ENCODE measurements at regions of chr3 and their contacts with region 1.

Region 1: GRCh38 chr3:98817547-98818041 is 54.5 kb downstream of the ST3GAL6 start:
- DNase-seq: peak; percentile 39
- H3K4me3 ChIP-seq: no peak overlapping the region
- H3K27ac ChIP-seq: peak overlapping the region; percentile 40 to 59
- H3K4me1 ChIP-seq: peaks cover 10 to 22% of the 10 kb centered on the region in 2 experiments
- H3K27me3 ChIP-seq: no peaks in the 10 kb centered on the region
- CTCF ChIP-seq: peak; percentile 69
- EP300 ChIP-seq: no peak
- RAD21 ChIP-seq: peak; percentile 81

Region 2: DNA sequence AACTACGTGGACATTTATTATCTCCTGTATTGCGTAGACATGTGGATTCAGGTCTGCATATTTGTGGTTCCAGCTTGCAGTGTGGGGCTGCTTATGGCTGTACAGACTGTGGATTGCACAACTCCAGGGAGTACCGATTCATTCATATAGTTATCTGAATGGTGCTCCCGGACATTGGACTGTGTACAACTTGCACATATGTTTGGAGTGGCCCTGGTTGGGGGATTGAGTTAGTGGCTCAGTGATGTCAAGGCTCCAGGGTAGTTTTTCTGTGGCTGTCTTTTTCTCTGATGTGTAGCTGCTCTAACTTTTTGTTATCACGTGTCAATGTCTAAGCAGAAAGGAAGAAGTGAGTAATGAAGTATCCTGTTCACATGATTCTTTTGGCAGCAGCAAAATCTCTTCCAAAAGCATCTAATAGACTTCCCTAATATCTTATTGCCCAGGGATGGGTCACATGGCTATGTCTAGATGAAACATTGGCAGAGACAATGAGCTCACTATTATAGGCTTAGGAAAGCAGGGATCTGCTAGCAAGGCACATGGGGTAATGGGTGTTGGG is 38.7 kb before region 1 on chr3:
- CTCF ChIA-PET with region 1: interaction called, 11 read pairs
- POLR2A ChIA-PET with region 1: no interaction called
- DNase-seq: no peak
- H3K4me3 ChIP-seq: no peak overlapping the region
- H3K27ac ChIP-seq: peak overlapping the region; percentile 60 to 84
- H3K4me1 ChIP-seq: peaks cover 0 to 39% of the 10 kb centered on the region in 2 experiments
- H3K27me3 ChIP-seq: no peaks in the 10 kb centered on the region
- CTCF ChIP-seq: no peak
- EP300 ChIP-seq: no peak
- RAD21 ChIP-seq: no peak

Region 3: GRCh38 chr3:98791341-98792325 is 26.0 kb before region 1 on chr3:
- CTCF ChIA-PET with region 1: no interaction called
- POLR2A ChIA-PET with region 1: no interaction called
- DNase-seq: no peak
- H3K4me3 ChIP-seq: no peak overlapping the region
- H3K27ac ChIP-seq: peak overlapping the region in 1 of 2 experiments; percentile 49; a peak in 2 of 4 replicates
- H3K4me1 ChIP-seq: peaks cover 0 to 14% of the 10 kb centered on the region in 2 experiments; a peak in 2 of 4 replicates
- H3K27me3 ChIP-seq: no peaks in the 10 kb centered on the region
- CTCF ChIP-seq: no peak
- EP300 ChIP-seq: no peak
- RAD21 ChIP-seq: no peak

Region 4: GRCh38 chr3:98986073-98986472 is 168.5 kb after region 1 on chr3:
- CTCF ChIA-PET with region 1: interaction called, 54 read pairs
- POLR2A ChIA-PET with region 1: no interaction called
- DNase-seq: no peak
- H3K4me3 ChIP-seq: no peak overlapping the region
- H3K27ac ChIP-seq: peak overlapping the region; percentile 69 to 94; a peak in 3 of 4 replicates
- H3K4me1 ChIP-seq: peaks cover 11 to 27% of the 10 kb centered on the region in 2 experiments
- H3K27me3 ChIP-seq: no peaks in the 10 kb centered on the region
- CTCF ChIP-seq: no peak
- EP300 ChIP-seq: peak; percentile 20 to 39; a peak in 2 of 4 replicates
- RAD21 ChIP-seq: no peak

Region 5: DNA sequence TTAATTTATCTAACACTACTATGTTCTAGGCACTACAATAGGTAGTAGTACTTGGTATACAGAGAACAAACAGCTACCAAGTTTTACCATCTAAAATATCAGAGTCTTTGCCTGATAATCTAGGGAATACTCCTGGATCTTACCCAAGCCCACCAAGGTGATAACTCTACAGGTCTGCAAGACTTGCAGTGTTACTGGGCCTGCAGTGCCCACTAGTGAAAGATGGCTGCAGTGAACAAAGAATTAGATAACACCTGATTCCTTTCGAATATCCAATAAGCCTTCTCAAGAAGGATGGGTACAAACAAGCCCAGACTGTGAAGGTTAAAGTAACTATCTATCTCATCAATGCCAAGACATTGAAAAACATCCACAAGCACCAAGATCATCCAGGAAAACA is 400.9 kb after region 1 on chr3:
- CTCF ChIA-PET with region 1: no interaction called
- POLR2A ChIA-PET with region 1: no interaction called
- DNase-seq: no peak
- H3K4me3 ChIP-seq: no peak overlapping the region
- H3K27ac ChIP-seq: no peak overlapping the region
- H3K4me1 ChIP-seq: no peaks in the 10 kb centered on the region
- H3K27me3 ChIP-seq: no peaks in the 10 kb centered on the region
- CTCF ChIP-seq: no peak
- EP300 ChIP-seq: no peak
- RAD21 ChIP-seq: no peak

Region 6: DNA sequence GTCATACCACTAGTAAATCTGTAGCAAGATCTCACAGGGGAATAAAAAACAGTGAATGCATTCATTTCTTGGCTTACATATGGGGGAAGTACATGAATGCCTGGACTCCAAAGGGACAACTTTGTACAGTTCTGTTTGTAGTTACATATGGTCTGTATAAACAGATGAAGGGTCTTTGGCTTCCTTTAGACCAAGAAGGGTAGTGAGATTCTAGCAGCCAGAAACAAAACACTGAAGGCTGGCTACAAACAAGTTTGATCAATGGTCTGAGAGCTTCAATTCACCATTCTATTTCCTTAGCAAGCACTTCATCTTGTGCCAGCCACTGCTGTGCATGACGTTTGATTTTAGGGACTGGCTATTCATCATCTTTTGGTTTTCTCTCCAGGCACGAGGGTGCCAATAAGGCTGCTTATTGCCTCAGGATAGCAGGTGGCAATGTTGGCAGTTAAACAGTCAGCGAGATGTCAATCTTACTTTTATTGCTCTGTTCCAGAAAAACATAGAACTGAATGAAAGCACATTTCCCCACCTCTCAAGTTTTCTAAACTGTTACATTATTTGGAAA is 507.1 kb after region 1 on chr3:
- CTCF ChIA-PET with region 1: no interaction called
- POLR2A ChIA-PET with region 1: no interaction called
- DNase-seq: no peak
- H3K4me3 ChIP-seq: no peak overlapping the region
- H3K27ac ChIP-seq: no peak overlapping the region
- H3K4me1 ChIP-seq: no peaks in the 10 kb centered on the region; a peak in 1 of 4 replicates
- H3K27me3 ChIP-seq: no peaks in the 10 kb centered on the region; the same call in 1 of the 2 replicates
- CTCF ChIP-seq: no peak
- EP300 ChIP-seq: no peak
- RAD21 ChIP-seq: no peak

Measured in SK-N-SH (cell line).